Common myeloid progenitor, CD34-positive (primary cell): ENCODE measurements at regions of chr6 and their contacts with region 1.

Region 1: DNA sequence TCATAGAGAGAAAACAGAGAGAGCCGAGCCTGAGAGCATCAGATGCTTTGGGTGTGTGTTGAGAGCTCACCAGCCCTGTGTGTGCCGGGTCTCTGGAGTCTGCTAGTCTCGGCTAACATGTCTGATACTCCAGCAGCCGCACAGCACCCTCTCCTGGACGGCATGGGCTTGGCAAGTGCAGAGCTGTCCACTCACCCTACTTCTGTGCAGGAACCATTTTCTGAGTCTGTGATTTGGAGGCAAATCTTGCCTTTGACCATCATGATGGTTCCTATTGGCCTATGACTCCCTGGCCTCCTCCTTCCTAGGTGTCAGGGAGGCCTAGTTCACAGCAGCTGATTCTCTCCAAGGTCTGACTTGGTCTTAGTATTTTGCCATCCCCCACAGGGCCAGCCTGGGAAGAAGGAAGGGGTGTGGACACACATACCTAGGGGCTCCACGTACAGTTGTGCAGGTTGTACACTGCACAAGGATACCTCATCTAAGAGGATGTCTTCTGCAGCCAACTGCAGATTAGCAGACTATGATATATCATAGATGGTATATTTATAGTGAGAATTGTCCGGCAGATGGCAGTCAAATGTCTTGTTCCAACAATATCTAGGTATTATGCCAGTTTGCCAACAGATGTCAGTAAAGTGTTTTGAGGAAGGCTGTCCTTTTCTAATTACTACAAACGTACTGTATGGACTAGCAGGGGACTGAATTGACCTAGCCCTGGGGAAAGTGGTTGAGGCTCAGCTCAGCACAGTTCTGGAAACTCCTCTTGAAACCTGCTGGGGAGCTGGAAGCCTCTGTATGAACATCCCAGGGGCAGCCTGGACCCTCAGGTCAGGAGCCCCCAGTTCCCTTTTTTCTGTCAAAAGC is 13.0 kb downstream of the FGD2 start:
- DNase-seq: peak; percentile 86 to 95 (median 92)
- H3K4me3 ChIP-seq: no peak overlapping the region
- H3K27ac ChIP-seq: no peak overlapping the region
- H3K4me1 ChIP-seq: peaks cover 3 to 40% (median 10%) of the 10 kb centered on the region in 4 experiments
- H3K27me3 ChIP-seq: no peaks in the 10 kb centered on the region

Region 2: GRCh38 chr6:36765594-36766398 is 252.6 kb before region 1 on chr6:
- CTCF ChIA-PET with region 1: interaction called, 79 read pairs
- POLR2A ChIA-PET with region 1: no interaction called
- DNase-seq: peak; percentile 85 to 91 (median 87)
- H3K4me3 ChIP-seq: no peak overlapping the region
- H3K27ac ChIP-seq: no peak overlapping the region
- H3K4me1 ChIP-seq: peaks cover 5 to 27% (median 21%) of the 10 kb centered on the region in 4 experiments
- H3K27me3 ChIP-seq: no peaks in the 10 kb centered on the region

Region 3: DNA sequence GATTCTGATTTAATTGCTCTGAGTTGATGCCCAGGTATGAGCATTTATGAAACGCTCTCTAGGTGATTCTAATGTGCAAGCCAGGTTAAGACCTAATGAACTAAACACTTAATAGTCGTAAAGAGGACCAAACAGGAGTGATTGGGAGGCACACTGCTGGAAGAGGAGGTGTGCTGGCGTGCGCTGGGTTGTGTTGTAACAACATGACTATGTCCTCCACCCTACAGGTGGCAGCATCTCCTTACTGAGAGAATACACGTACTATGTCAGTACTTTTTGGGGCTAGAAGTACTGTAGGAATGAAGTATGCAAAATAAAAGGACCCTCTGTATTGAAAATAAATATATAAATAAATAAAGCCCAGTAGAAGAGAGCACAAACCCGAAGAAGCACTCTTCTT is 120.8 kb before region 1 on chr6:
- CTCF ChIA-PET with region 1: interaction called, 10 read pairs
- POLR2A ChIA-PET with region 1: no interaction called
- DNase-seq: peak in 2 of 3 donors; percentile 55 to 63
- H3K4me3 ChIP-seq: no peak overlapping the region
- H3K27ac ChIP-seq: no peak overlapping the region
- H3K4me1 ChIP-seq: no peaks in the 10 kb centered on the region
- H3K27me3 ChIP-seq: no peaks in the 10 kb centered on the region

Region 4: GRCh38 chr6:36985808-36986703 is 32.4 kb before region 1 on chr6 and contains the start of gene MTCH1:
- CTCF ChIA-PET with region 1: interaction called, 45 read pairs
- POLR2A ChIA-PET with region 1: interaction called, 4 read pairs
- DNase-seq: peak; percentile 81 to 91 (median 91)
- H3K4me3 ChIP-seq: peak within 1 kb of the TSS; percentile 58 to 99 (median 90)
- H3K27ac ChIP-seq: peak within 1 kb of the TSS; percentile 68 to 82
- H3K4me1 ChIP-seq: peaks cover 9 to 39% (median 31%) of the 10 kb centered on the region in 4 experiments
- H3K27me3 ChIP-seq: no peaks in the 10 kb centered on the region

Region 5: DNA sequence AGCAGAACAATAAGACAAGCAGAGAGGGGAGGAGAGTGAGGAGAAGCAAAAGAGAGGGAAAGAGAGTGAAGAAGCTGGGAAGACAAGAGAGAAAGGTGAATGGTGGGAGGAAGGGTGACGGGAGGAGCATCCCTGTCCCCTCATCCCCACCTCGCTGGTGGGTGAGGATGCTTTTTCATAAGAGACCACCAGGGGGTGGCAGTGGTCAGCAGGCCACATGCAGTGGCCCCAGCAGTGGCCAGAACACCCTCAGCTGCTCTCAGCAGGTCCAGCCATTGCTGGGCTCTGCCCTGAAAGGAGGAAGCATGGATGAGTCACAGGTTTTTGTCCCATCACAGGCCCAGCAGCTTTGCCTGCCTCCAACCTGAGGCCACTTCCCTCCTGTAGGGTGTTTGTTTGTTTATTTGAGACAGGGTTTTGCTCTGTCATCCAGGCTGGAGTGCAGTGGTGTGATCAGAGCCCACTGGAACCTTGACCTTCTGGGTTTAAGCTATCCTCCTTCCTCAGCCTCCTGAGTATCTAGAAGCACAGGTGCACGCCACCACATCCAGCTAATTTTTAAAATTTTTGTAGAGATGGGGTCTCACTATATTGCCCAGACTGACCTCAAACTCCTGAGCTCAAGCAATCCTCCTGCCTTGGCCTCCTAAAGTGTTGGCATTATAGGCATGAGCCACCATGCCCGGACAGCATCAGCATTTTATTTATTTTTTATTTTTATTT is 11.0 kb after region 1 on chr6:
- CTCF ChIA-PET with region 1: interaction called, 474 read pairs
- POLR2A ChIA-PET with region 1: interaction called, 3 read pairs
- DNase-seq: peak; percentile 81 to 92 (median 88)
- H3K4me3 ChIP-seq: no peak overlapping the region
- H3K27ac ChIP-seq: peak overlapping the region in 1 of 2 experiments; percentile 44
- H3K4me1 ChIP-seq: peaks cover 0 to 55% (median 7%) of the 10 kb centered on the region in 4 experiments
- H3K27me3 ChIP-seq: no peaks in the 10 kb centered on the region

Region 6: GRCh38 chr6:37169496-37170272 is 151.3 kb after region 1 on chr6 and contains the start of gene PIM1:
- CTCF ChIA-PET with region 1: interaction called, 436 read pairs
- POLR2A ChIA-PET with region 1: interaction called, 6 read pairs
- DNase-seq: peak; percentile 96 to 98 (median 98)
- H3K4me3 ChIP-seq: peak within 1 kb of the TSS; percentile 74 to 98 (median 97)
- H3K27ac ChIP-seq: peak within 1 kb of the TSS; percentile 80 to 93
- H3K4me1 ChIP-seq: peaks cover 23 to 39% (median 31%) of the 10 kb centered on the region in 4 experiments
- H3K27me3 ChIP-seq: no peaks in the 10 kb centered on the region

Region 7: DNA sequence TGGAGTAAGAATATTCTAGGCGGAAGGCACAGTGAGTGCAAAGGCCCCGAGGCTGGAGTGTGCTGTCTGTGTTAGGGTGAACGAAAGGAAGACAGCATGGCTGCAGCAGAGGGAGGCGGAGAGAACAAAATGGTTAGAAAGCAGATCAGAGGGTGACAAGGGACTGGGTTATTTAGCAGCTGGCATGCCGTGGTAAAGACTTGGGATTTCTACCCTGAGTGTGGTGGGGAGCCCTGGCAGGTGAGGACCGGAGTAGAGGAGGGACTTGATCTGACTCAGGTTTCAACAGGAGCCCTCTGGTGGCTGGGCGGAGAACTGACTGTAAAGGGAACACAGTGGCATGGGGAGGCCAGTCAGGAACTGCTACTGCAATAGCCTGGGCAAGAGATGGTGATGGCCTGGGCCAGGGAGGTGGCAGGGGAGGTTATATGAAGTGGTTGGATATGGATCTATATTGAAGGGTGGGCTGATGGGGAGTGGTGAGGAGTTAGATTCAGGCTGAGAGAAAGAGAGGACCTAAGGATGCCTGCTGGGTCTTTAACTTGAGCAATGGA is 189.5 kb after region 1 on chr6:
- CTCF ChIA-PET with region 1: interaction called, 618 read pairs
- POLR2A ChIA-PET with region 1: no interaction called
- DNase-seq: peak; percentile 87 to 92 (median 90)
- H3K4me3 ChIP-seq: no peak overlapping the region
- H3K27ac ChIP-seq: no peak overlapping the region
- H3K4me1 ChIP-seq: peaks cover 10 to 61% (median 53%) of the 10 kb centered on the region in 4 experiments
- H3K27me3 ChIP-seq: no peaks in the 10 kb centered on the region